Activated naive CD4-positive, alpha-beta T cell treated with anti-CD3 and anti-CD28 coated beads, Interleukin-2, amount 10 ng/mL, durations not matched to agents 7 days and 5 days (primary cell): ENCODE measurements at regions of chr15 and their contacts with region 1.

Region 1: DNA sequence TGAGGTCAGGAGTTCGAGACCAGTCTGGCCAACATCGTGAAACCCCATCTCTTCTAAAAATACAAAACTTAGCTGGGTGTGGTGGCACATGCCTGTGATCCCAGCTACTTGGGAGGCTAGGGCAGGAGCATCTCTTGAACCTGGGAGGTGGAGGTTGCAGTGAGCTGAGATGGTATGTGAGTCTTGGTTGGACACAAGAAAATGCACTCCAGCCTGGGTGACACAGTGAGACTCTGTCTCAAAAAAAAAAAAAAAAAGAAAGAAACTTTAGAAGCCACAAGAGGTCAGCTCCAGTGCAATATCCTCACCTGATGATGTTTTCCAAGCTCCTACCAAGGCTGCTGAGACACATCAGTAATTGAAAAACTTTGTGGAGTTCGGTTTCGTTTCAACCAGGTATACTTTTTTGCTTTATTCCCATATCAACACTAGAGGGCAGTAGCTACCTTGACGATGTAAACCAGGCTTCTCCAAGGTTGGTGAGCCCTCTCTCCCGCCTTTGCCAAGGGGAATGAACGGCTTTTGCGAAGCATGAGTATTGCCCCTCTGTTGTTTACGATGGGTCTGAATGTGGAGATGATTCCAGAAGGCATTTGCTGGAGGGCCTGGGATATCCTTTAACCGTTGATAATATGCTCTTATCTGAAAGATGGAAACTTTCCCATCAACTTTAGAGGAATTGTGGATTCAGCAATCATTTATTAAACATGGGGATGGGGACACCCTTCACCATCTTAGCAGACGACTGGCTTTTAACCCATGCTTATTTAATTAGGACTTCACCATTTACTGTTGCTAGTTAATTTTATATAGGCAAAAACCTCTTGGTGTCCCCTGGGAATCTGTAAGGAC is 202.8 kb downstream of the SV2B start:
- DNase-seq: peak; percentile 52
- H3K4me3 Mint-ChIP-seq: no peak overlapping the region
- H3K27ac Mint-ChIP-seq: peak overlapping the region; percentile 66
- H3K4me1 Mint-ChIP-seq: peaks cover 66% of the 10 kb centered on the region
- H3K27me3 Mint-ChIP-seq: peaks cover 44% of the 10 kb centered on the region

Region 2: GRCh38 chr15:91165850-91166249 is 137.0 kb before region 1 on chr15:
- CTCF ChIA-PET with region 1: no interaction called
- DNase-seq: no peak
- H3K4me3 Mint-ChIP-seq: no peak overlapping the region
- H3K27ac Mint-ChIP-seq: no peak overlapping the region
- H3K4me1 Mint-ChIP-seq: no peaks in the 10 kb centered on the region
- H3K27me3 Mint-ChIP-seq: peaks cover 10% of the 10 kb centered on the region

Region 3: DNA sequence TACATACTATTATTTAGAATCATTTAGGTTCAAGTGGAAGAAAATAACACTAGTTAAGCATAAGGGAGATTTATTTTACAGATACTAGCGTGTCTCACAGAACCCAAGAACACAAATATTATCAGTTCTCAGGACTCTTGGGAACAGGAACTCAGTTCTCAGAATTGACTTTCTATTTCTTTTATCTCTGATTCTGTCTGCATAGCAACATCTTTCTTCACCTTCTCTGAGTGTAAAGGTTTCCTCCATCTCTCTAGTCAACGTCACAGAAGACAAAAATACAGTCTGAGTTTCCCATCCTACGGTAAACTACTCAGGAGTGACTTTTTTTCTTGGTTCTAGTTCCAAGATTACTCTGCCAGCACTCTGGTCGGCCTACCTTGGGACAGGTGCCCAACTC is 17.3 kb after region 1 on chr15:
- CTCF ChIA-PET with region 1: no interaction called
- DNase-seq: peak; percentile 45
- H3K4me3 Mint-ChIP-seq: peak overlapping the region; percentile 56
- H3K27ac Mint-ChIP-seq: peak overlapping the region; percentile 91
- H3K4me1 Mint-ChIP-seq: peaks cover 71% of the 10 kb centered on the region
- H3K27me3 Mint-ChIP-seq: peaks cover 10% of the 10 kb centered on the region

Region 4: DNA sequence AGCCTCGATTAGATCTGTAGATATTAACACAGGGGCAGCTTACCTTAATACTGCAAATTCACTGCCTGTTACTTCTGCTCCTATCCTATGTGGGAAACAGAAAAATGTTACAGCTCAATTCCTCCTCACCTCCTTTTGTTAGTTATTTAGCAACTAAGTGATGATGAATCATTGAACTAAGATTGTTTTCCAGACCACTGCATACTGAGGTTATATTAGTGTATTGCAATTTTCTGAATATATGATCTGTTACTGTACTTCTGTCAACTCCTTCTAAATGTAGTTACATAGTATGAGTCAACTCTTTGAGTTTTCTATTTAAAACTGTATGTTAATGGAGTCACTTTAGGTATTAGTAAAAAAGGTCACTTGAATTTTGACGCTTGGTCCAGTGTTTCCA is 219.2 kb after region 1 on chr15:
- CTCF ChIA-PET with region 1: interaction called, 24 read pairs
- DNase-seq: no peak
- H3K4me3 Mint-ChIP-seq: no peak overlapping the region
- H3K27ac Mint-ChIP-seq: peak overlapping the region; percentile 20
- H3K4me1 Mint-ChIP-seq: peaks cover 66% of the 10 kb centered on the region
- H3K27me3 Mint-ChIP-seq: peaks cover 9% of the 10 kb centered on the region

Region 5: GRCh38 chr15:91852741-91853510 is 550.1 kb after region 1 on chr15:
- CTCF ChIA-PET with region 1: interaction called, 15 read pairs
- DNase-seq: peak; percentile 77
- H3K4me3 Mint-ChIP-seq: peak overlapping the region; percentile 88
- H3K27ac Mint-ChIP-seq: peak overlapping the region; percentile 89
- H3K4me1 Mint-ChIP-seq: peaks cover 70% of the 10 kb centered on the region
- H3K27me3 Mint-ChIP-seq: peaks cover 7% of the 10 kb centered on the region